Mammary epithelial cell (primary cell): ENCODE measurements at regions of chr3 and their contacts with region 1.

Region 1: DNA sequence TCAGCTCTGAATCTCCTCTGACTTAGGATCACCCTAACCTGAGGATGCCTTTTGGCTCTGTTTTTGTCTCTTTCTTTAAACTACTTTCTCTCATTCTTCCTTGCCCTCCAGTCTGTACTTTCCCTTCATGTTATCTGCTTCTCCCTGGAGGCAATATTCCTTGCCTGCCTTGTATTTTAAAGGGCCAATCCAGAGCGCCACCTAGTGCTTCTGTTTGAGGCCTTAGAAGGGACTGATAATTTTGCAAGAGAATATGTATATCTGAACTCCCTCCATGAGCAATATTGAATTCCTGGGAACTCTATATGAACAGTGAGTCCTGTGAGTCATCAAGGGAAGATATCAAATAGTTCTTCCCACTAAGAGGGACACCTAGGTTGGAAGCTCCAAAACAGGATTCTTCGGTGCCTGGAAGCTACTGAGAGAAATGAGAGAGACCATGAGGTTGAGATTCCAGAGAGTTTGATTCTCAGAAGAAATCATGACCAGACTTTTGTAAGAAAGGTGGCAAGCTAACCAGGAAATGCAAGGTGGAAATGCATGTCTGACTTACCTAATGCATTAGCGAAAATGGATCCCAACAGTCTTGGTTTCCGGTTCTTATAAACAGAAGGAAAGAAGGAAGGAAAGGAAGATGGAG is 203.8 kb upstream of the CD96 start:
- DNase-seq: peak; percentile 66
- H3K4me3 ChIP-seq: no peak overlapping the region
- H3K27ac ChIP-seq: no peak overlapping the region
- H3K4me1 ChIP-seq: peaks cover 12% of the 10 kb centered on the region
- H3K27me3 ChIP-seq: no peaks in the 10 kb centered on the region
- CTCF ChIP-seq: peak; percentile 75 to 90

Region 2: GRCh38 chr3:109731620-109732473 is 1606.3 kb before region 1 on chr3:
- CTCF ChIA-PET with region 1: no interaction called
- dilution Hi-C with region 1: no loop called
- in situ Hi-C with region 1: no loop called
- intact Hi-C with region 1: loop called (anchors 5 kb)
- DNase-seq: peak; percentile 39
- H3K4me3 ChIP-seq: no peak overlapping the region
- H3K27ac ChIP-seq: no peak overlapping the region
- H3K4me1 ChIP-seq: no peaks in the 10 kb centered on the region
- H3K27me3 ChIP-seq: peaks cover 2% of the 10 kb centered on the region
- CTCF ChIP-seq: peak; percentile 88 to 98

Region 3: DNA sequence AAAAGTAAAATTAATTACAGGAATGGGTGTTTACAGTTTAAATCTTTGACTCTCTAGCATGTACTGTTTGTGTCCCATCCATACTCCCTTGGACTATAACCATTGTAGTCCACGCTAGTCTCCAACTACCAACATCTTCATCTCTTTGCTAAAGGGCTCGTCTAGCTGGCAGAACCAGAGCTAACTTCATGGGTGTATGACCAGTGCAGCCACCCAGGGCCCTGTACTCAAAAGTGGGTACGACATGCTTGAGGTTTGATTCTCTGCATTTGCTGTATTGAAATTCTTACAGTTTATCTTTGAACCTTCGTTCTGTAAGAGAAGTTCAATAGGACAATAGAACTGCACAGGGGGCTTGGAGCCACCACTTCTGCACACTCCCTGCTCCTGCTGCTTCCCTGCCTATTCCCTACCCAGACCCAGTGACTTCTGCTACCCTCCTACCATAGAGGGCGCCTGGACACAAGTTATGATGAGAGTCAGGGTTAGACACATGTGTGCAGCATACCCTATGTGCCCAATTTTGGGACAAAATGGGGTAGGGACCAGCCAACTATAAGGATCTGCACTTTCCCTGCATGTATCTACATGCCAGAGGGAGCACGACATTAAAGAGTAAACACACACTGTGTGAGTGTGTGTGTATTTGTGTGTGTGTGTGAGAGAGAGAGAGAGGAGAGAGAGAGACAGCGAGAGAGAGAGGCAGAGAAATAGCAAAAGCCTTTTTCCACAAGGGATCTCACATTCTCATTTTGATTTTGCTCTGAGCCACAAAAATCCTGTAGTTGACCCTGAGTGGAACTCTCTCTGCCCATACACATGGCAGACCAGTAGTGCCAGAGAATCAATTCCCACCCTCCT is 325.6 kb before region 1 on chr3:
- CTCF ChIA-PET with region 1: no interaction called
- dilution Hi-C with region 1: no loop called
- in situ Hi-C with region 1: no loop called
- intact Hi-C with region 1: loop called (anchors 1 kb)
- DNase-seq: peak; percentile 31
- H3K4me3 ChIP-seq: no peak overlapping the region
- H3K27ac ChIP-seq: no peak overlapping the region
- H3K4me1 ChIP-seq: no peaks in the 10 kb centered on the region
- H3K27me3 ChIP-seq: peaks cover 1% of the 10 kb centered on the region
- CTCF ChIP-seq: peak in 1 of 2 donors; percentile 48

Region 4: GRCh38 chr3:111080413-111080812 is 257.8 kb before region 1 on chr3:
- CTCF ChIA-PET with region 1: interaction called, 18 read pairs
- dilution Hi-C with region 1: no loop called
- in situ Hi-C with region 1: no loop called
- intact Hi-C with region 1: loop called (anchors 1 kb)
- DNase-seq: peak; percentile 26
- H3K4me3 ChIP-seq: no peak overlapping the region
- H3K27ac ChIP-seq: no peak overlapping the region
- H3K4me1 ChIP-seq: peaks cover 2% of the 10 kb centered on the region
- H3K27me3 ChIP-seq: no peaks in the 10 kb centered on the region
- CTCF ChIP-seq: peak; percentile 26 to 57

Region 5: GRCh38 chr3:111277226-111277625 is 61.0 kb before region 1 on chr3:
- CTCF ChIA-PET with region 1: no interaction called
- dilution Hi-C with region 1: no loop called
- in situ Hi-C with region 1: no loop called
- intact Hi-C with region 1: loop called (anchors 5 kb)
- DNase-seq: peak; percentile 20
- H3K4me3 ChIP-seq: no peak overlapping the region
- H3K27ac ChIP-seq: no peak overlapping the region
- H3K4me1 ChIP-seq: no peaks in the 10 kb centered on the region
- H3K27me3 ChIP-seq: peaks cover 4% of the 10 kb centered on the region
- CTCF ChIP-seq: peak in 1 of 2 donors; percentile 20

Region 6: GRCh38 chr3:111539351-111540331 is 201.5 kb after region 1 on chr3:
- CTCF ChIA-PET with region 1: no interaction called
- dilution Hi-C with region 1: no loop called
- in situ Hi-C with region 1: no loop called
- intact Hi-C with region 1: loop called (anchors 1 kb)
- DNase-seq: peak; percentile 55
- H3K4me3 ChIP-seq: no peak overlapping the region
- H3K27ac ChIP-seq: no peak overlapping the region
- H3K4me1 ChIP-seq: peaks cover 21% of the 10 kb centered on the region
- H3K27me3 ChIP-seq: no peaks in the 10 kb centered on the region
- CTCF ChIP-seq: peak; percentile 92 to 94